ENCODE measurements at regions of chr2 and their contacts with region 1.

Region 1: DNA sequence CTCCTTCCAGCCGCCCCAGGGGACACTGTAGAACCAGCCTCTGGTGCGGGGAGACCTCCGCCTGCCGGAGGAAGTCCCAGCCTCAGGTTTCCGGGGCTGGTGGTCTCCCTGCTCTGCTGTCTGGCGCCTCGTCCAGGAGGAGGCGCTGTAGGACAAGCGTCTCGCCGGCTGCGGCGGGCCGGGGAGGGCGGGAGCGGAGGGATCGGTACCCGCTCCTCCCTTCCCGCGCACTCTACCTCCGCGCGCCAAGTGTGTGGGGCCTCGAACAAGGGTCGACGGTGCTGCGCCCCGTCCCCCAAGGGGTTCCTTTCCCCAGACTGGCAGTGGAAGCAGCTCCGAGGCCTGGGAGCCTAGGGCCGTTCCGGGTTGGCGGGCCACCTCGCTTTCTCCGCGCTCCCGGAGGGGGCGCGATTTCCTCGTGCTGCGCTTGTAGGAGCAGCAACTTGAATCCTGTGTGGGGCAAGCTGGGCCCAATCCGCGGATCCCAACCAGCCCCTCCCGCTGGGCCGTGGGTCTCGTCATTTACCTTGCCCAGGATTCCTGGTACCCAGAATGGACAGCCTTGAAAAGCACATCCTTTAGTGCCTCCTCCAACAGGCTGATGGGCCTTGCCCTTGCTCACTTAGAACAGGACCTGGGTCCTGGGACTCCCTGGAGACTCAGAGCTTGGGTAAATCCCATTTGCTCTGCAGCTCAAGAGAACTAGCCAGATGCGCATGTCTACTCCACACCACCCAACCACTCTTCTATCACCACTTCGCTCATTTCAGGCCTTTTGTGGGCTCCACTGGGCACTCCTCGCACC is 10.6 kb upstream of the HOXD4 start:
- DNase-seq: peak; percentile 85

Region 2: DNA sequence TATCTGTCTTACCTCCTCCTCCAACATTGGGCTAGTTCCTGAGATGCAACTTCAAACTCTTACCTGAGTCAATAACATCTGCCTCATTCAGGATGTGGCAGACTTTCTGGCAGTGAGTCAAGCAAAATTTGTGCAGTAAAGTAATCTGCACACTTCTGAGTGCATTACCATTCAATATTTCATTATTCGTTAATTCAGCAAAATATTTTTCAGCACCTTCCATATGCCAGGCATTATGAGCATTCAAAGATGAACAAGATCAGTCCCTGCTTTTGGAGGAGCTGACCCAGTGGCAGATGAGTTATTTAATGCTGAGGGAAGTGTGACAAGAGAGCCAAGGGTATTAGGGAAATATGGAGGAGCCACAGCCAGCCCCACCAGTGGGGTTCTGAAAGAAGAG is 478.4 kb before region 1 on chr2:
- CTCF ChIA-PET with region 1: no interaction called
- POLR2A ChIA-PET with region 1: no interaction called
- DNase-seq: no peak

Region 3: DNA sequence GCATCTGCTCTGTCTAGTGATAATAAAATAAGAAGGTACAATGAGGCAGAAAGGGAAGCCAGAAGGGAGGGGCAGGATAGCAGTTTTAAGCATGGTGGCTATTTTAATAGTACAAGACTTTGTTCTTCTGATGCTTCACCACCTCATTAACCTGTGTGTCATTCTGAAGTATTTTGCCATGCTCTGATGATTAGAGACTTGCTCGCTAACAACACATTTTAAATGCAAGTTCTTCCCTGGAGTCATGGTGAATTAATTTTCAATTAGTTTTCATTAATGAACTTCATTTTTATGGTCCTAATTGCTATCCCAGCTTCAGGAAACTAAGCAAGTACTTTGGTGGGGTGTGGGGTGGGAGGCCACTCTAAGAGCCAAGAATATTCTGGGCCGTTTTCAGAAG is 112.9 kb before region 1 on chr2:
- CTCF ChIA-PET with region 1: no interaction called
- POLR2A ChIA-PET with region 1: no interaction called
- DNase-seq: no peak

Region 4: DNA sequence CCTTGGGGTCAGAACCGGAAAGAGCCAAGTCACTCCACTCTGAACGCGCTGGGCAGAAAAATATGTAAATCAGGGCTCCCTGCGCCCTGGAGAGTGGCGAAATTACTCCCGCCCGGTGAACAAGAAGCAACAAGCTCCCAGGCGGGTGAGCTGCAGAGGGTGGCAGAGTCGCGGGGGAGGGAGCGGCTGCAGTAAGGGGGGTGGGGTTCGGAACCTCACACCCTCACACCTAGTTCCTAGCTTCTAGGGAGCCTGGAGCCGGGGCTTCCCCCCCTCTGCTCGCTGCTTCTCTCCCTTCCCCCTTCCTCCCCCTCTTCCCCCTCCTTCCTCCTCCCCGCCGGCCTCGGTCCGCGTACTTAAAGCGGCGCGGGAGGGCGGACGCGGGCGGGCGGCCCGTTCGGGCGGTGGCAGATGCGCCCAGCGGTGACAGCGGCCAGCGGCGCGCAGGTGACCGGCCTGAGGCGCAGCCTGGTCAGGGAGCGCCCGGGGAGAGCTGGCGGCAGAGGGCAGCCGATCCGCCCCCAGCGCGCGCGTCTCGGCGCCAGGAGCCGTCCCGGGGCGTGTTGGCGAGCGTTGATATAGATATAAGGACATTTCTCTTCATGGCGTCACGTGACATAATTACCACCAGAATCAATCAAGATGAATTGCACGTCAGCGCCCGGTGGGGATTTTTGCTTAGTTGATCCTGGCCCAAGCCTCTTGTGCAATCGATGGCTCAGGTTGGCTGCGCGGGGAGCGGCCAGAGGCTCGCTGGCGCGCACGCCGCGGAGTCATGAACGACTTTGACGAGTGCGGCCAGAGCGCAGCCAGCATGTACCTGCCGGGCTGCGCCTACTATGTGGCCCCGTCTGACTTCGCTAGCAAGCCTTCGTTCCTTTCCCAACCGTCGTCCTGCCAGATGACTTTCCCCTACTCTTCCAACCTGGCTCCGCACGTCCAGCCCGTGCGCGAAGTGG is 33.9 kb before region 1 on chr2 and contains the start of gene HOXD11:
- CTCF ChIA-PET with region 1: no interaction called
- POLR2A ChIA-PET with region 1: interaction called, 11 read pairs
- DNase-seq: peak; percentile 81

Region 5: GRCh38 chr2:176126929-176127773 is 13.6 kb before region 1 on chr2:
- CTCF ChIA-PET with region 1: interaction called, 13 read pairs
- POLR2A ChIA-PET with region 1: interaction called, 5 read pairs
- DNase-seq: no peak

Region 6: GRCh38 chr2:176162911-176163654 is 22.4 kb after region 1 on chr2:
- CTCF ChIA-PET with region 1: no interaction called
- POLR2A ChIA-PET with region 1: no interaction called
- DNase-seq: no peak

Region 7: GRCh38 chr2:176454893-176455811 is 314.4 kb after region 1 on chr2:
- CTCF ChIA-PET with region 1: interaction called, 26 read pairs
- POLR2A ChIA-PET with region 1: interaction called, 12 read pairs
- DNase-seq: peak; percentile 71

Region 8: GRCh38 chr2:176554101-176555048 is 413.7 kb after region 1 on chr2:
- CTCF ChIA-PET with region 1: interaction called, 17 read pairs
- POLR2A ChIA-PET with region 1: interaction called, 13 read pairs
- DNase-seq: peak; percentile 65

Region 9: DNA sequence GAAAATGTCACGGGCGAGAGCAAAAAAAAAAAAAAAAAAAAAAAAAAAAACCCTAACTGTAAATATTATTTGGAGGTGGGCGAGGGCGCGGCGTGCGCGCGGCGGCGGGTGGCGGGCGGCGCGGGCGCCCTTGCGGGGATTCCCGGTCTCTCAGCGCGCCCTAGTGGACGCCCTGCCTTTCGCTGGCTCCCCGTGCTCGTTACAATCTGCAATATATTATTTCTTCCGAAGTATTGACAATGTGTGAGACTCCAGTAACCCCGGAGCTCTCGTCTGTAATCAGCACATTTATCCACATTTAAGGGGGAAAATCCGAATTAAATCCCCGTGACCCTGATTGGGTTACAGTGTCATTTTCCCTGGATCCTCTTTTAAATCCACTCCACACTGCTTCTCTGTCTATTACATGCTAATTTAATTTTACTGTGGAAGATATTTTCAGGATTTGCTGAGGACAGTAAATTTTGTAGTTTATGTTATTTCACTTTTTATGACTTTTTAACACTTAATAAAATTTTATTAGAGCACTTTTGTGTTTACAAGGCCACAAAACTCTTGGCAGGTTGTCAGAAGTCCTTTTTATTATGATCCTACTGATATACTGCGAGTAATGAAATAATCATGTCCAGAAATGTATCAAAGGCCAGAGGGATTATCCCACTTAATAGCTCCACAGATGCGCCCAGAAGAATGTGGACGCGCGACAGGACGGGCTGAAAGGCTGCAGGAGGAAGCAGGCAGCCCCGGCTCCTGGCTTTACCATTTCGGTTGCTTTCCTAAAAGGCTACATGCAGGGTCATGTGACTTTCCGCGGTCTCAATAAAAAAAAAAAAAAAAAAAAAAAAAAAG is 497.7 kb after region 1 on chr2:
- CTCF ChIA-PET with region 1: interaction called, 12 read pairs
- POLR2A ChIA-PET with region 1: interaction called, 3 read pairs
- DNase-seq: peak; percentile 82